Dorsolateral prefrontal cortex (tissue), 120 donors: ENCODE measurements at regions of chr14 and their contacts with region 1.

Region 1: DNA sequence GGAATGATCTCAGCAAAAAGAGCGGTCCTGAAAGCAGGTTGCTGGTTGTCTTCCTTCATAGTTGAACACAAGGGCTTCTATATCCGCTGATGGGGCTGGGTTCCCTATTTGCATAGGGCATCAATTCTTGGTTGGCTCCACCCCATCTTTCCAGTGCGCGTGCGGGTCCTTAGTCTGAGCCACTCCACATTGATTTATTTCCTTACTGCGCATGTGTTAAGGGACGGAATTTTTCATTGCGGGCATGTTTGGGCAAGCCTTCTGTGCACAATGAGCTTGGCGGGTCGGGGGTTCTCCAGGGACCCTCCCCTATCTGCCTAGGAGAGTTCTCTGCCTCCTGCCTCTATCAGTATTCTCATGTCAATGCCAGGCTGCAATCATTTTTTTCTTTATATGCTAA is 21.2 kb upstream of the DLGAP5 start:
- DNase-seq: no peak
- H3K4me3 ChIP-seq: no peak overlapping the region
- H3K27ac ChIP-seq: no peak overlapping the region
- H3K27me3 ChIP-seq: no peaks in the 10 kb centered on the region
- CTCF ChIP-seq: no peak

Region 2: GRCh38 chr14:55136885-55137786 is 75.5 kb before region 1 on chr14:
- intact Hi-C with region 1: no loop called
- DNase-seq: peak; percentile 18 to 65 (median 60)
- H3K4me3 ChIP-seq: peak overlapping the region in 49 of 59 donors; percentile 0 to 55 (median 26)
- H3K27ac ChIP-seq: peak overlapping the region in 58 of 59 donors; percentile 2 to 88 (median 72)
- H3K27me3 ChIP-seq: no peaks in the 10 kb centered on the region
- CTCF ChIP-seq: peak in 10 of 56 donors; percentile 6 to 28 (median 21)

Region 3: GRCh38 chr14:55201224-55202050 is 11.2 kb before region 1 on chr14:
- intact Hi-C with region 1: no loop called
- DNase-seq: no peak
- H3K4me3 ChIP-seq: no peak overlapping the region
- H3K27ac ChIP-seq: no peak overlapping the region
- H3K27me3 ChIP-seq: no peaks in the 10 kb centered on the region
- CTCF ChIP-seq: no peak

Region 4: DNA sequence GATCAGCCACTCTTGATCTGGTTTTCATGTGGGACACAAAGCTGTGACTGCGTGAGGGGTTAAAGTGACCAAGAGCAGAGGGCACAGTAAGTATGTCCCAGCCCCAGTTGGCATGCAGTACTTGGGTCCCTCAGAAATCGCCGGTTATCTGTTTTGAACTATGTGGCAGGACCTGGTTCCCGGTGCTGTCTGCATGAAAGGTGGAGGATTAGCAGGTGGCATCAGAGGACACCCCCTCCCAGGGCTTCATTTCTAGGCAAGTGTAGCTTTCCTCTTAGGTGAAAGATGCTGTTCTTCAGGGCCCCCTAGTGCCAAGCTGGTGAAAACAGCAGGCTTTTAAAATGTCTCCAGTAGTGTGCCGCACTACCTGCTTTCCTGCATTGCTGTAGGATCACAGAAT is 141.9 kb after region 1 on chr14:
- intact Hi-C with region 1: loop called in 1 of 2 experiments (anchors 2 kb)
- DNase-seq: peak in 8 of 10 donors; percentile 46 to 78 (median 58)
- H3K4me3 ChIP-seq: no peak overlapping the region
- H3K27ac ChIP-seq: peak overlapping the region in 17 of 59 donors; percentile 8 to 59 (median 30)
- H3K27me3 ChIP-seq: no peaks in the 10 kb centered on the region
- CTCF ChIP-seq: peak; percentile 30 to 79 (median 65)